MCF 10A (cell line): ENCODE measurements at regions of chr18 and their contacts with region 1.

Region 1: GRCh38 chr18:864872-865273 is 39.8 kb upstream of the ADCYAP1 start:
- DNase-seq: peak; percentile 78
- H3K4me3 Mint-ChIP-seq: no peak overlapping the region
- H3K27ac Mint-ChIP-seq: no peak overlapping the region
- H3K4me1 Mint-ChIP-seq: no peaks in the 10 kb centered on the region
- H3K27me3 Mint-ChIP-seq: no peaks in the 10 kb centered on the region
- CTCF ChIP-seq: peak; percentile 99

Region 2: DNA sequence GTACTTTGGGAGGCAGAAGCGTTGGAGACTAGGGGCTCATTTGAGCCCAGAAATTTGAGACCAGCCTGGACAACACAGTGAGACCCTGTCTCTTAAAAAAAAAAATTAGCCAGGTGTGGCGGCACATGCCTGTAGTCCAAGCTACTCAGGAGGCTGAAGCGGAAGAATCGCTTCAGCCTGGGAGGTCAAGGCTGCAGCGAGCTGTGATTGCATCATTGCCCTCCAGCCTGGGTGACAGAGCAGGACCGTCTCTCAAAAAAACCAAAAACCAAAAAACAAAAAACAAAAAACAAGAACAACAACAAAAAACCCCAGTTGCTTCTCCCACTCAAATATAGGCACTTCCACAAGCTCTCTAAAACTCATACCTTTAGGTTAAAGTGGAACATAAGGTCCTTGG is 12.4 kb after region 1 on chr18:
- CTCF ChIA-PET with region 1: interaction called, 10 read pairs
- POLR2A ChIA-PET with region 1: no interaction called
- intact Hi-C with region 1: no loop called
- DNase-seq: no peak
- H3K4me3 Mint-ChIP-seq: no peak overlapping the region
- H3K27ac Mint-ChIP-seq: no peak overlapping the region
- H3K4me1 Mint-ChIP-seq: no peaks in the 10 kb centered on the region
- H3K27me3 Mint-ChIP-seq: peaks cover 33% of the 10 kb centered on the region
- CTCF ChIP-seq: no peak

Region 3: GRCh38 chr18:1499265-1499664 is 634.4 kb after region 1 on chr18:
- CTCF ChIA-PET with region 1: interaction called, 23 read pairs
- POLR2A ChIA-PET with region 1: no interaction called
- intact Hi-C with region 1: loop called (anchors 5 kb)
- DNase-seq: no peak
- H3K4me3 Mint-ChIP-seq: no peak overlapping the region
- H3K27ac Mint-ChIP-seq: no peak overlapping the region
- H3K4me1 Mint-ChIP-seq: no peaks in the 10 kb centered on the region
- H3K27me3 Mint-ChIP-seq: no peaks in the 10 kb centered on the region
- CTCF ChIP-seq: no peak

Region 4: GRCh38 chr18:1585879-1586488 is 721.1 kb after region 1 on chr18:
- CTCF ChIA-PET with region 1: no interaction called
- POLR2A ChIA-PET with region 1: no interaction called
- intact Hi-C with region 1: loop called (anchors 2 kb)
- DNase-seq: peak; percentile 45
- H3K4me3 Mint-ChIP-seq: no peak overlapping the region
- H3K27ac Mint-ChIP-seq: no peak overlapping the region
- H3K4me1 Mint-ChIP-seq: peaks cover 5% of the 10 kb centered on the region
- H3K27me3 Mint-ChIP-seq: no peaks in the 10 kb centered on the region
- CTCF ChIP-seq: peak; percentile 39

Region 5: GRCh38 chr18:2204736-2205135 is 1339.9 kb after region 1 on chr18:
- CTCF ChIA-PET with region 1: no interaction called
- POLR2A ChIA-PET with region 1: no interaction called
- intact Hi-C with region 1: no loop called
- DNase-seq: no peak
- H3K4me3 Mint-ChIP-seq: no peak overlapping the region
- H3K27ac Mint-ChIP-seq: no peak overlapping the region
- H3K4me1 Mint-ChIP-seq: no peaks in the 10 kb centered on the region
- H3K27me3 Mint-ChIP-seq: no peaks in the 10 kb centered on the region
- CTCF ChIP-seq: no peak

Region 6: GRCh38 chr18:2547477-2548087 is 1682.7 kb after region 1 on chr18:
- CTCF ChIA-PET with region 1: interaction called, 8 read pairs
- POLR2A ChIA-PET with region 1: no interaction called
- intact Hi-C with region 1: loop called (anchors 2 kb)
- DNase-seq: peak; percentile 55
- H3K4me3 Mint-ChIP-seq: no peak overlapping the region
- H3K27ac Mint-ChIP-seq: peak overlapping the region; percentile 23
- H3K4me1 Mint-ChIP-seq: no peaks in the 10 kb centered on the region
- H3K27me3 Mint-ChIP-seq: no peaks in the 10 kb centered on the region
- CTCF ChIP-seq: peak; percentile 58